ENCODE measurements at regions of chr19 and their contacts with region 1.

Region 1: GRCh38 chr19:48110350-48110966 is at the start of gene PLA2G4C:
- DNase-seq: peak; percentile 48
- ATAC-seq: peak; percentile 86
- H3K4me3 ChIP-seq: peak within 1 kb of the TSS; percentile 83; the same call in 1 of the 2 replicates
- H3K27ac ChIP-seq: peak within 1 kb of the TSS; percentile 62
- H3K4me1 ChIP-seq: peaks cover 7% of the 10 kb centered on the region
- H3K27me3 ChIP-seq: no peaks in the 10 kb centered on the region
- CTCF ChIP-seq: no peak
- EP300 ChIP-seq: 0 out of 4 replicates have a peak, but pooled peaks of 1 of the 2 experiments have one; percentile 14
- POLR2A ChIP-seq: peak; percentile 86
- RAD21 ChIP-seq: no peak
- polyA plus RNA-seq, gene PLA2G4C: 0.53 to 0.64 TPM

Region 2: DNA sequence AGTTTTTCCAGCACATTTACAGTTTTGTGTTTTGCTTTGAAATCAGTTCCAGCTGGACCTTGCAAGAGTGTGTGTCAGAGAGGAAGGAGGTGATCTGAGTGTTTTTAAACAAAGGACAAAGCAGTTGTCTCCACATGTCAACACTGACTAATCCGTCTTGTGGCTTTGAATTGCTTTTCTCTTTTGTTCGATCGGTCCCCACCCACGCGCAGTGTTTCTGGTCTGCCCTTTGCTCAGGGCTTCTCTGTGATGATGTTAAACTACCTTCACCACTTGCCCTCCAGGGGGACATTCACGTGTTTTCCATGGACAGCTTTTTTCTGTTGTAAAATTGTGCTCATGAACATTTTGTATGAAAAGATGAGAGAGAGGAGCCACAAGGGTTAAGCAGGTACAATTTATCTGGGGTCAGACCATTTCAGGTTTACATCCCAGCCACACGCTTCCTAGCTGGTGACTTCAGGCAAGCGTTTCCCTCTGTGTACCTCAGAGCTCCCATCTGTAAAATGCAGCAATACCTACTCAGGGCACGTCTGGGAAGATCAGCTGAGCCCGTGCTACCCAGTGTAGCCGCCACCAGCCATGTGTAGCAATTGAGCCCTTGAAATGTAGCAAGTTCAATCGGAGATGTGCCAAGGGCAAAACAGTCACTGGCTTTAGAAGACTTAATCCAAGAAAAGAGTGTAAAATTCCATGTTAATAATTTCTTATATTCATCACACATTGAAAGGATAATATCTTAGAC is 13.6 kb after region 1 on chr19:
- CTCF ChIA-PET with region 1: interaction called, 85 read pairs
- POLR2A ChIA-PET with region 1: interaction called, 8 read pairs
- RAD21 ChIA-PET with region 1: interaction called, 11 read pairs
- SMC1A ChIA-PET with region 1: interaction called, 31 read pairs
- in situ Hi-C with region 1: no loop called
- intact Hi-C with region 1: no loop called
- DNase-seq: no peak
- ATAC-seq: no peak
- H3K4me3 ChIP-seq: no peak overlapping the region
- H3K27ac ChIP-seq: no peak overlapping the region
- H3K4me1 ChIP-seq: peaks cover 13% of the 10 kb centered on the region
- H3K27me3 ChIP-seq: no peaks in the 10 kb centered on the region
- CTCF ChIP-seq: no peak
- EP300 ChIP-seq: no peak
- POLR2A ChIP-seq: no peak
- RAD21 ChIP-seq: no peak

Region 3: DNA sequence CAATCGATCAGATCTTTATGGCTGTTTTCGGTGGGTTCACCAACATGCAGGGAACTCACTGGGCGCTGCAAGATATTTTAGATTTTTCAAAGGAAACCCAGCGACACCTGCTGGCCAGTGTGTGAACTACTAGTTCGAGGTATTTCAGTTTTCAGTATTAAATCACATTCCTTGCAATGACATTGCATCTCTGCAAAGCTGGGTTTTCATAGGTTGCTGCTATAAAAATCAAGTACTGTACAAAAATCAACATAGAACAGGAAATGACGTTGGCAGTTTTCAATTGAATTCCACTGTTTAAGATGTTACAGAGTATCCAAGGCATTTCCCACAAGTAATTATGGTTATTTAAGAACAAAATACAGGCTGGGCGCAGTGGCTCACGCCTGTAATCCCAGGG is 42.1 kb after region 1 on chr19:
- CTCF ChIA-PET with region 1: interaction called, 192 read pairs
- POLR2A ChIA-PET with region 1: interaction called, 4 read pairs
- RAD21 ChIA-PET with region 1: interaction called, 44 read pairs
- SMC1A ChIA-PET with region 1: interaction called, 35 read pairs
- in situ Hi-C with region 1: no loop called
- intact Hi-C with region 1: loop called (anchors 1 kb)
- DNase-seq: no peak
- ATAC-seq: peak; percentile 71
- H3K4me3 ChIP-seq: no peak overlapping the region
- H3K27ac ChIP-seq: no peak overlapping the region
- H3K4me1 ChIP-seq: no peaks in the 10 kb centered on the region
- H3K27me3 ChIP-seq: no peaks in the 10 kb centered on the region
- CTCF ChIP-seq: peak; percentile 67 to 81 (median 73); a peak in 5 of 6 replicates
- EP300 ChIP-seq: no peak
- POLR2A ChIP-seq: no peak
- RAD21 ChIP-seq: peak; percentile 78

Region 4: GRCh38 chr19:48194041-48194871 is 83.8 kb after region 1 on chr19:
- CTCF ChIA-PET with region 1: interaction called, 26 read pairs
- POLR2A ChIA-PET with region 1: no interaction called
- RAD21 ChIA-PET with region 1: no interaction called
- SMC1A ChIA-PET with region 1: no interaction called
- in situ Hi-C with region 1: no loop called
- intact Hi-C with region 1: no loop called
- DNase-seq: no peak
- ATAC-seq: peak; percentile 39; the same call in 2 of the 3 replicates
- H3K4me3 ChIP-seq: no peak overlapping the region
- H3K27ac ChIP-seq: no peak overlapping the region
- H3K4me1 ChIP-seq: no peaks in the 10 kb centered on the region
- H3K27me3 ChIP-seq: no peaks in the 10 kb centered on the region
- CTCF ChIP-seq: peak; percentile 47 to 71 (median 53); a peak in 5 of 6 replicates
- EP300 ChIP-seq: no peak
- POLR2A ChIP-seq: no peak
- RAD21 ChIP-seq: peak; percentile 53; the same call in 1 of the 2 replicates

Measured in GM12878 (cell line).